ENCODE measurements at regions of chr5 and their contacts with region 1.

Region 1: DNA sequence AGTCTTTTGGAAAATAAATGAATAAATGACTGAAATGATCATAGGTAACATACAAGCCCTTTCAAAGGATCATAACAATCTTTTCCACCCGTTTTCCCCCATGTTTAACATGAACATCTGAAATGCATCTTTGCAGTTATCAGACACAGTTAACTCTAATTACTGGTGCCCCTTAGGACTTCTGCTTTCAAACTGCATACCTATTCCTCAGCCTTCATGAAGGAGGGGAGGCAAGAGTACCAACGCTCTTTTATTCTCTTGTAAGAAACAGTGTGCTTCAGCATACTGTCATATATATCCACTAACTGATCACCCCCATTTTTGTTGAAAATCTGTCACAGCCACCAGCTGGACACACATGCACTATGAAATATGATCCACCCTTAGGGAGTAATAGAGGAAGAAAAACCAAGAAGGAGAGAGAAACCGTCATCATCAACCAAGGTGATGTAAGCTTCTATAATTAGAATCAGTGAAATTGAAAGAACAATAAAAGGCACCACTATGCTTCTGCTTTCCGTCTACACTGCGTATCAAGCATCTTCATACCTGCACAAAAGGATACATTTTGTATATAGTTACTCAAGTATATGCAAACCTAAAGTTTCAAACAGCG is 98.7 kb downstream of the RAPGEF6 start:
- DNase-seq: no peak
- H3K4me3 Mint-ChIP-seq: peak overlapping the region; percentile 45
- H3K27ac Mint-ChIP-seq: peak overlapping the region; percentile 67
- H3K4me1 Mint-ChIP-seq: peaks cover 58% of the 10 kb centered on the region
- H3K27me3 Mint-ChIP-seq: no peaks in the 10 kb centered on the region

Region 2: GRCh38 chr5:131481569-131481968 is 54.8 kb before region 1 on chr5:
- intact Hi-C with region 1: loop called (anchors 5 kb)
- DNase-seq: no peak
- H3K4me3 Mint-ChIP-seq: no peak overlapping the region
- H3K27ac Mint-ChIP-seq: no peak overlapping the region
- H3K4me1 Mint-ChIP-seq: peaks cover 23% of the 10 kb centered on the region
- H3K27me3 Mint-ChIP-seq: no peaks in the 10 kb centered on the region

Region 3: GRCh38 chr5:131514316-131515283 is 21.7 kb before region 1 on chr5:
- intact Hi-C with region 1: loop called (anchors 2 kb)
- DNase-seq: no peak
- H3K4me3 Mint-ChIP-seq: peak overlapping the region; percentile 65
- H3K27ac Mint-ChIP-seq: peak overlapping the region; percentile 40
- H3K4me1 Mint-ChIP-seq: peaks cover 34% of the 10 kb centered on the region
- H3K27me3 Mint-ChIP-seq: no peaks in the 10 kb centered on the region

Region 4: DNA sequence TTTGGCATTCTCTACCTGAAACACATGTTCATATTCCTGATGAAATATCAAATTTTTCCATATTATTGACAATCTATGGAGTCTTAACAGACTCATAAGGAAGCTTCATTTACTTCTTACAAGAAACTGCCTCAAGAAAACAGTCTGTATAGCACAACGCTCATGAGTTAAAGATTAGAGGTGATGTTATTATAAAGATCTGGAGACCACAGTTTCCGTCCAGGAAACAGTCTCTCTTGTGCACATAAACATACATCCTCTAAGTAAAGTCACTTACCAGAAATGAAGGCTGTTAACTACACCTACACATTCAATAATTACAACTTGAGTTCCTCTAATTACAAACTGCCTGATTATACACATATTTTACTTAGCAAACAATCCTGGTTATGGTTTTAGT is 11.9 kb after region 1 on chr5:
- intact Hi-C with region 1: loop called (anchors 2 kb)
- DNase-seq: no peak
- H3K4me3 Mint-ChIP-seq: peak overlapping the region; percentile 82
- H3K27ac Mint-ChIP-seq: peak overlapping the region; percentile 83
- H3K4me1 Mint-ChIP-seq: peaks cover 60% of the 10 kb centered on the region
- H3K27me3 Mint-ChIP-seq: no peaks in the 10 kb centered on the region

Region 5: DNA sequence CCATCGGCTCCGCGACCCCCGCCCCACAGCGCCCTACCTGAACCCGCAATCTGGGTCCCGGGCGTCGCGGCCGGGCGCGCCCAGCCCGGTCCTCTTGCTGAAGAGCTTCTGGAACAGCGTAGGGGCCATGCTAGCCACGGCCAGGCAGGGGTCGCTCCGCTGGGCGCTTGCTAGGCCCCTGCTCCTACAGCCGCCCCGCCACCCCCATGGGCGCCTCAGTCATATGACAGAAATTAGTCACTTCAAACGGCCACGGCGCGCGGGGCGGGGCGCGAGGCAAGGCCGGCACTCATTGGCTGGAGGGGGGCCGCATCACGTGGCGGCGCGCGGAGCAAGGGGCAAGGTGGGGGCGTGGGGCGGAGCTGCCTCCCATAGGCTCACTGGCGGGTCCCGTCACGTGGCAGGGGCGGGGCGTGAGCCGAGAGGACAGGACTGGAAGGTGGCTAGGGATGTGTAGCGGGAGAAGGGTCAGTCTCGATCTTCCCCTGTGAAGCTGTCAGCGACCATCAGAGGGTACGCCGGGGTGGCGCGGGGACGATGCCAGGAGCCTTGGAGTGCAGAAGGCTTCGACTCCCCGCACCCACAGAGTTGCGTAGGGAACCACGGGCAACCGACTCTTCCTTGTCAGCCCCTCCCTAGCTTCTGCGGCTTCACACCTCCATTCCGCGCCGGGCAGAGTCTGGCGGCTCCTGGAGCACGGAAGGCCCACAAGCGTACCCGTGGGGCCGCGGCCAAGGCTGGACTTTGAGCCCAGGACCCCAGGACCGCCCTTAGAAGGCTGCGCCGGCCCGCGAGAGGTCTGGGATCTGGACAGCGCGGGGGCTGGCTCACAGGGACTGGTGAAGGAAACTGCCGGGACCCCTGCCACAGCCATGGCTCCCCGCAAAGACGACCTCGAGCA is 260.7 kb after region 1 on chr5 and contains the start of gene FNIP1:
- intact Hi-C with region 1: loop called (anchors 5 kb)
- DNase-seq: peak; percentile 99
- H3K4me3 Mint-ChIP-seq: peak within 1 kb of the TSS; percentile 97
- H3K27ac Mint-ChIP-seq: peak within 1 kb of the TSS; percentile 91
- H3K4me1 Mint-ChIP-seq: peaks cover 28% of the 10 kb centered on the region
- H3K27me3 Mint-ChIP-seq: peaks cover 8% of the 10 kb centered on the region
- total RNA-seq, gene FNIP1: 18.1 and 18.8 TPM in 2 replicates

Measured in activated T-helper 2 cell treated with anti-CD3 and anti-CD28 coated beads, Interferon-gamma antibody, Interleukin-2, Interleukin-4, amounts not matched to agents 10 μg/mL and 5 μg/mL and 100 μg/mL, durations not matched to agents 14 hours and 24 hours and 36 hours (primary cell).